Activated CD4-positive, alpha-beta T cell treated with anti-CD3 and anti-CD28 coated beads for 36 hours (primary cell): ENCODE measurements at regions of chr14 and their contacts with region 1.

Region 1: GRCh38 chr14:102545461-102546265 is 36.1 kb upstream of the ANKRD9 start:
- DNase-seq: no peak
- ATAC-seq: no peak
- H3K4me3 Mint-ChIP-seq: no peak overlapping the region
- H3K27ac Mint-ChIP-seq: no peak overlapping the region
- H3K4me1 Mint-ChIP-seq: peaks cover 3% of the 10 kb centered on the region
- H3K27me3 Mint-ChIP-seq: peaks cover 29% of the 10 kb centered on the region

Region 2: GRCh38 chr14:102272392-102272791 is 273.3 kb before region 1 on chr14:
- CTCF ChIA-PET with region 1: no interaction called
- POLR2A ChIA-PET with region 1: interaction called, 16 read pairs
- intact Hi-C with region 1: no loop called
- DNase-seq: no peak
- ATAC-seq: no peak
- H3K4me3 Mint-ChIP-seq: no peak overlapping the region
- H3K27ac Mint-ChIP-seq: no peak overlapping the region
- H3K4me1 Mint-ChIP-seq: peaks cover 6% of the 10 kb centered on the region
- H3K27me3 Mint-ChIP-seq: no peaks in the 10 kb centered on the region